Activated CD8-positive, alpha-beta memory T cell treated with anti-CD3 and anti-CD28 coated beads, Interleukin-2, amount 10 ng/mL, durations not matched to agents 7 days and 5 days (primary cell): ENCODE measurements at regions of chr16 and their contacts with region 1.

Region 1: DNA sequence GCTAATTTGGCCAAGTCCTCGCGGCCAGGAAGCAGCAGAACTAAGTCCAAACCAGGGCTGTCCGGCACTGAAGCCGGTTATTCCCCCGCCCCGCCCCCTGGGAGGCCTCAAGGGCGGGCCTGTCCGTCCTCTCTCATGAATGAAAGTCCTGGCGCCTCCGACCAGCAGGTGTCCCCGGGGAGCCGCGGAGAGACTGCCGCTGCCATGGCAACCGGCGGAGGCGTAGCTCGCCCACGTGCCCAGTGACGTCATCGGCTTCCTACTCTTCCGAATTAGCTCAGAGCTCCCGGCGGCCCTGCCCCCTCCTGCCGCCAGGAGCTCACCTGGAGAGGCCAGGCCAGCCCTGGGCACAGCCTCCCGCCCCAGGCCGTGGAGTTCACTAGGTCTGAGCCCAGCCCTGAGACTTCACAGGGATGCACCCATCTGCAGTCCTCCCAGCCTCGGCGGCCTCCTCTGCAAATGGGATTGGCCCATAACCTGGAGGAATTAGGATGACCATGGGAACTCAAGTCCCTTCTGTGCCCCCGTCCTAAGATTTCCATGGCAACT is 1.3 kb downstream of the SPATA2L start:
- DNase-seq: peak; percentile 98
- ATAC-seq: peak; percentile 38
- H3K4me3 Mint-ChIP-seq: peak overlapping the region; percentile 66
- H3K27ac Mint-ChIP-seq: peak overlapping the region; percentile 24
- H3K4me1 Mint-ChIP-seq: peaks cover 33% of the 10 kb centered on the region
- H3K27me3 Mint-ChIP-seq: no peaks in the 10 kb centered on the region

Region 2: DNA sequence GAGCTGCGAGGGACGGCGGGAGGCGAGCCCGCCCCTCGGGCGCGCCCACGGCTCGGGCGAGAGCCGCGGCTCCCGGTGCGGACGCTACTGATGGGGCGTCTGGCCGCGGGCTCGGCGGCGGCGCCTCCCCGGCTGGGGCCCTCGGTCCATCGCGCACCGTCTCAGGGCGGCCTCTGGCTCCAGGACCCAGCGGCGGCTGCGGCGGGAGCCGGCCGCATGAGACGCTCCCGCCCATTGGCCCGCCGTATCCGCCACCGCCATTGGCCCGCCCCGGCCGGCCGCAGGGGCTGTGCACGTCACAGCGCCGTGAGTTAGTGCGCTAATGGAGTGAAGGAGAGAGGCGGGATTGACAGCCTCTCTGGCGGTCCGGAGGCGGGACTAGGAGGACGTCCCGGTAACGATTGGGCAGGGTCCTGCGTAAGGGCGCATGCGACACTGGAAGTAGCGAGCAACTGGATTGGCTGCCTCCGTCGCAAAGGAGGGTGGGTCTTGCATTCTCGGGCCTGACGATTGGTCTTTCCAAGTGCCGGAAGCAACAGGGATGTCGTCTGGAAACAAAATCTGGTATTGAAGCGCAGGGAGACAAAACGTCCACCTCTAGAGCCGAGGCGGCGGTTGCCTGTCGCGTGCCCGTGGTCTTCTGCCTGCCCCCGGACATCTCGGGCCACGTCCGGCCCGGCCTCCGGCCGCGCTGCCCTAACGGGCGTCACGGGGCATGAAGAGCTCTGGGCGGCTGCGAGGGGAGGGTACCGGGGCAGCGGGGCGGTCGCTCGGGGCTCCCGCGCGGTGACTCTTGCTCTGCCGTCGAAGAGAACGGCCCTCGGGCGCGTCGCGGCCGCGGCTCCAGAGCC is 209.6 kb before region 1 on chr16 and contains the start of gene ANKRD11:
- CTCF ChIA-PET with region 1: no interaction called
- DNase-seq: peak; percentile 100
- ATAC-seq: peak; percentile 91
- H3K4me3 Mint-ChIP-seq: peak within 1 kb of the TSS; percentile 92
- H3K27ac Mint-ChIP-seq: peak within 1 kb of the TSS; percentile 95
- H3K4me1 Mint-ChIP-seq: peaks cover 50% of the 10 kb centered on the region
- H3K27me3 Mint-ChIP-seq: no peaks in the 10 kb centered on the region
- total RNA-seq, gene ANKRD11: 184 to 235 TPM

Region 3: DNA sequence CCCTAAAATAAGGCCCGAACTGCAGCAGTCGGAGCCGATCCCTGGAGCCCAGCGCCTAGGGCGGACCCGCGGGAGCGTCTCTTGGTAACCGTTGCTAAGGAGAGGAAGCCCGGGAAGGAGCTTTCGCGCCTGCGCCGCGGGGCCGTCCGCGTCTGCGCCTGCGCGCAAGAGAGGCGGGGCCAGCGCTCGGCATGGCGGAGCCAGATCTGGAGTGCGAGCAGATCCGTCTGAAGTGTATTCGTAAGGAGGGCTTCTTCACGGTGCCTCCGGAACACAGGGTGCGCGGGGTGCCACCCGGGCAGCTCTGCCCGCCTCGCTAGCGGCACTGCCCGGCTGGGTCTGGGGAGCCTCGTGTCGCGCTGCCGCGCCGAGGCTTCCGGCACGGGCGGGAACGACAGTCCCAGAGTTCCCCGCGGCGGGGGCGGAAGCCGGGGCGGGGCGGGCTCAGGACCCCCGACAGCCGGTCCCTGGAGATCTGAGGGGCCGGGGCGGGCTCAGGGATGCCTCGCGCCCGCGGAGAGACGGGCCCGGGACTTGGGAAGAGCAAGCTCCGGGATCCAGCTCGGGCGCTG is 13.6 kb before region 1 on chr16 and contains the start of gene CDK10:
- CTCF ChIA-PET with region 1: interaction called, 31 read pairs
- DNase-seq: peak; percentile 92
- ATAC-seq: peak; percentile 90
- H3K4me3 Mint-ChIP-seq: peak within 1 kb of the TSS; percentile 82
- H3K27ac Mint-ChIP-seq: peak within 1 kb of the TSS; percentile 84
- H3K4me1 Mint-ChIP-seq: peaks cover 17% of the 10 kb centered on the region
- H3K27me3 Mint-ChIP-seq: no peaks in the 10 kb centered on the region
- total RNA-seq, gene CDK10: 80.5 to 94.2 TPM

Region 4: GRCh38 chr16:89720813-89721545 is 20.8 kb after region 1 on chr16 and contains the starts of genes VPS9D1 and ZNF276:
- CTCF ChIA-PET with region 1: interaction called, 39 read pairs
- DNase-seq: peak; percentile 87
- ATAC-seq: peak; percentile 48
- H3K4me3 Mint-ChIP-seq: peak within 1 kb of the TSS; percentile 86
- H3K27ac Mint-ChIP-seq: peak within 1 kb of the TSS; percentile 99
- H3K4me1 Mint-ChIP-seq: peaks cover 46% of the 10 kb centered on the region
- H3K27me3 Mint-ChIP-seq: no peaks in the 10 kb centered on the region
- total RNA-seq, gene VPS9D1: 3.6 to 4.6 TPM
- total RNA-seq, gene ZNF276: 38.0 to 58.1 TPM

Region 5: DNA sequence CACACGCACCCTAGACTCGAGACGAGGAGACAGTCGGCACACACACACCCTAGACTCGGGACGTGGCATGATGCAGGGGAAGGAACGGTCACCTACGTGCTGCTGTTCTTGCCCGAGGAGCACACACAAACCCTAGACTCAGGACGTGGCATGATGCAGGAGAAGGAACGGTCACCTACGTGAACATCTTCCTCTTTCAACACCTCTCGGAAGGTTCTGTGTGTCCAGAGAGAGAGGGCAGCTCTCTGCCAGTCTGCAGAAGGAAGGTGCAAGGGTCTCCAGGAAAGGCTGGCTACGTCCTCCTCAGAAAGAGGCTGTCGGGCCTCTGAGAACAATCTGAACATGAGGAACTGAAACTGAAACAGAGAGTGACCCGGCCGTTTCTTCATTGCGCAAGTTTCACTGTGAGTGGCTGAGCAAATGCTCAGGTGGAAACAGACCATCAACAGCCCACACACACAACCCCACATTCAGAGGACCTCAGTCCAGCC is 64.6 kb after region 1 on chr16:
- CTCF ChIA-PET with region 1: interaction called, 20 read pairs
- DNase-seq: peak; percentile 90
- ATAC-seq: peak; percentile 89
- H3K4me3 Mint-ChIP-seq: peak overlapping the region; percentile 85
- H3K27ac Mint-ChIP-seq: peak overlapping the region; percentile 94
- H3K4me1 Mint-ChIP-seq: peaks cover 59% of the 10 kb centered on the region
- H3K27me3 Mint-ChIP-seq: no peaks in the 10 kb centered on the region

Region 6: DNA sequence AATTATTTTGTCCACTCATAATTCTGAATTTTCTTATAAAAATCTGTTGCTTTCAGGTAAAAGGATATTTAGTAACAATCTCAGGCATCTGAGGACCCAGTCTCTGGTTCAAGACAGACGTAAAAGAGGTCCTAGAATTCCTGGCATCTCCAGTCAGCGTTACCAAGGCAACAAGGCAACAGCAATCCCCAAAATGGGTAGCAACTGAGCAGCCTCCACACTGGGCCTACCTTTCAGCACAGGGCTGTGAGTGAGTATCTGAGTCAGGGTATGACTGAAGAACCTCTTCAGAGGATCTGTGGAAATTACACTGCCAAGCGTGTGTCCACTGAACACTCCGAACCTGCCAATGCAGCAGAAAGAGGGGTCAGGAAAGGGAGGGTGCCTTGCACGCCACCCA is 95.5 kb after region 1 on chr16:
- CTCF ChIA-PET with region 1: interaction called, 100 read pairs
- DNase-seq: no peak
- ATAC-seq: no peak
- H3K4me3 Mint-ChIP-seq: no peak overlapping the region
- H3K27ac Mint-ChIP-seq: no peak overlapping the region
- H3K4me1 Mint-ChIP-seq: peaks cover 3% of the 10 kb centered on the region
- H3K27me3 Mint-ChIP-seq: no peaks in the 10 kb centered on the region

Region 7: DNA sequence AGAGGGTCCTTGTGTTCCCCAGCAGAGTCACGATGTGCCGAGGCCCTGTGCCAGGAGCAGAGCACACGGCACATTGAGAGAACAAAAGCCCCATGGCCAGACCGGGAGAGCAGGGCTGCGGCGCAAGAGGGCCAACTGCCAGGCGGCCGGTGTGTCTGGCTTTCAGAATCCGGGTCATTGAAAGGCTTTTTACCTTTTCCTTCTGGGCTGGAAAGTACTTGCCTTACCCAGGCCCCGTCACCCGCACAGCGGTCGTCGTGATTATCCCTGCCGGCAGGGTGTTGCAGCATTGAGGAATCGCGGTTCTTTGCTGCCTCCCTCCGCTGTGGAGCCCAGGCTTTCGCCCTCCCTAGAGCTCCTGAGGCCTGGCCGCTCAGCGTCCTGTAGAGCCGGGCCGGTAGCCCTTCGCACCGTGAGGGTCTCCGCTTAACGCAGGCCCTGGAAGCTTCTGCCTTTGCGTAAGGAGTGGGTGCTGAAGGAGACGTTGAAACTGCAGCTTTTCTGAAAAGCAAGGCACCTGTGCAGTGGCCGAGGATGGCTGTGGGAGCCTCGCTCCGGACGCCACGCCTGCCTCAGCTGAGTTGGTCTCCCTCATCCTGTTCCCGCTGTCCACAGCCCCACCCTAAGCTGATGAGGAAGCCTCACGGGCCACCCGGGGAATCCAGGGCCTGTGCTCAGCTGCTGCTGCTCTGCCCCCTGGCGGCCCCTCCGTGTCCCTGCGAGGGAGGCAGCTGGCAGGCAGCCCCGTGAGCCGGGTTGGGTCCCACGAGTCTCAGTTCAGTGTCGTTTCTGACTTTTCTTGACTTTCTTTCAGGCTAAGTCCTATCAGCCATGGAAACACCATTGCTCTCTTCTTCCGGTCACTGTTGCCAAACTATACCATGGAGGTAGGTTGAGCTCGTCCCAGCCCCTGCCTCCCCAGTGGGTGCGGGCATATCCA is 209.9 kb after region 1 on chr16:
- CTCF ChIA-PET with region 1: interaction called, 17 read pairs
- DNase-seq: peak; percentile 78
- ATAC-seq: peak; percentile 87
- H3K4me3 Mint-ChIP-seq: no peak overlapping the region
- H3K27ac Mint-ChIP-seq: no peak overlapping the region
- H3K4me1 Mint-ChIP-seq: peaks cover 10% of the 10 kb centered on the region
- H3K27me3 Mint-ChIP-seq: no peaks in the 10 kb centered on the region